CD4-positive, alpha-beta T cell (primary cell): ENCODE measurements at regions of chr22 and their contacts with region 1.

Region 1: DNA sequence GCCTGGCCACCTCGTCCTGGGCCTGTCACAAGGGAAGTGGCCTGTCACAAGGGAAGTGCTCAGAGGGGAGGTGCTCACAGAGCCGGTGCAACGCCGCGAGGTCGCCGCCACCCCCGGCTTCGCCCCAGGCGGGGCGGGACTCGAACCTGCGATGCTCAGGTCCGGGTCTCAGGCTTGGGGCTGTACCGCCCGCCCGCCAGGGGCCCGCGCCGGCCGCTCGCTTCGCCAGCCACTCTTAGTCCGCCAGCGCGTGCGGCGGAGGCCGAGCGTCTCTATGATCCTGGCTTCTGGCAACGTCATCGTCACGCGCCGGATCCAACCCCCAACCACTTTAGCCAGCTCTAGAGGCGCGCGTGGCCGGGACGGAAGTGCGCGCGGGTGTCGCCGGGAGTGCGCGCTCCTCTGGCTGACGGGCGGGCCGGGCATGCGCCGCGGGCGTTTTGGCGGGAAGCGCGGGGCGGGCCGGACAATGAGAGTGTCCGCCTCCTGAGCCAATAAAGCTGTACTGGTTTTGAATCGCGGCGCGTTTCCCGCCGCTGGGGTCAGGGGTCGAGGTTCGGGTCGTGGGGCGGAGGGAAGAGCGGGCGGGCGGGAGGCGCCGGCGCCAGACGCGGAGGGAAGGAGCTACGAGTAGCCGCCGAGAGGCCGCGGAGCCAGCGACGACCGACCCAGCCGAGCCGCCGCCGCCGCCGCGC is at the start of gene TRMT2A:
- DNase-seq: peak; percentile 91 to 99 (median 96)
- ATAC-seq: peak; percentile 80
- H3K4me3 ChIP-seq: peak within 1 kb of the TSS; percentile 85
- H3K4me3 Mint-ChIP-seq: peak within 1 kb of the TSS; percentile 97
- H3K27ac ChIP-seq: peak within 1 kb of the TSS; percentile 76 to 84
- H3K27ac Mint-ChIP-seq: peak within 1 kb of the TSS; percentile 82
- H3K4me1 ChIP-seq: peaks cover 75% of the 10 kb centered on the region
- H3K4me1 Mint-ChIP-seq: peaks cover 30% of the 10 kb centered on the region
- H3K27me3 ChIP-seq: peaks cover 0 to 5% of the 10 kb centered on the region in 2 experiments
- H3K27me3 Mint-ChIP-seq: no peaks in the 10 kb centered on the region
- CTCF ChIP-seq: no peak
- total RNA-seq, gene TRMT2A: 79.3 to 84.2 TPM

Region 2: DNA sequence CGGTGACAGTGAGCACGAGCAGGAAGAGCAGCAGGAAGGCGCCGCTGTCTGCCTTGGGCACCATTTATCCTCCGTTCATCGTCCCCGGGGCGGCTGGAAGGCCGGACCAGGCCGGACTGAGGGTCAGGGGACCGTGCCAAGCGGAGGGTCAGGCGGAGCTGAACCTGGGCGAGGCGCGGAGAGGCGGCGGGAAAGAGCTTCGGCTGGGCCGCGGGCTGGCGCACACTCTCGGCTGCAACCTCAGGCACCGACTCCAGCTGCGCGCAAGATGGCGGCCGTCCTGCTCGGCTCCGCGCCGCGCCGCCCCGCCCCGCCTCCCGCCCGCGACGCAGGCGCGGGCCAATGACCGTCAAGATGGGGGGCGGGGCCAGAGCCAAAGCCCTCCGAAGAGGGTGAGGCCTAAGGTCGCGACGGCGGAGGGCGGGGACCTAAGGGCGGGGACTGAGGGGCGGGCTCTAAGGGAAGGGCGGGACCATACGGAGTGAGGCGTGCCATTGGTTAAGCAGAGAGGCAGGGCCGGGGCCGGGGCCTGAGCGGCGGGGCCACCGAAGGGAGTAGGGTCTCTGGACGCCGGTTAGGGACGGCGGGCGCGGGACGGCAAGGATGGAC is 994.9 kb before region 1 on chr22 and contains the start of gene DGCR2:
- CTCF ChIA-PET with region 1: no interaction called
- POLR2A ChIA-PET with region 1: no interaction called
- intact Hi-C with region 1: loop called in 1 of 2 experiments (anchors 5 kb)
- DNase-seq: peak; percentile 95 to 99 (median 96)
- ATAC-seq: peak; percentile 97
- H3K4me3 ChIP-seq: peak within 1 kb of the TSS; percentile 95
- H3K4me3 Mint-ChIP-seq: peak within 1 kb of the TSS; percentile 94
- H3K27ac ChIP-seq: peak within 1 kb of the TSS in 1 of 2 donors; percentile 73
- H3K27ac Mint-ChIP-seq: peak within 1 kb of the TSS; percentile 87
- H3K4me1 ChIP-seq: peaks cover 52% of the 10 kb centered on the region
- H3K4me1 Mint-ChIP-seq: peaks cover 52% of the 10 kb centered on the region
- H3K27me3 ChIP-seq: no peaks in the 10 kb centered on the region
- H3K27me3 Mint-ChIP-seq: no peaks in the 10 kb centered on the region
- CTCF ChIP-seq: no peak
- total RNA-seq, gene DGCR2: 31.9 to 35.5 TPM

Region 3: GRCh38 chr22:19854778-19855503 is 262.2 kb before region 1 on chr22 and contains the starts of genes GNB1L and RTL10:
- CTCF ChIA-PET with region 1: no interaction called
- POLR2A ChIA-PET with region 1: no interaction called
- intact Hi-C with region 1: loop called in 1 of 2 experiments (anchors 10 kb)
- DNase-seq: peak; percentile 92 to 99 (median 96)
- ATAC-seq: peak; percentile 89
- H3K4me3 ChIP-seq: peak within 1 kb of the TSS; percentile 99
- H3K4me3 Mint-ChIP-seq: peak within 1 kb of the TSS; percentile 95
- H3K27ac ChIP-seq: peak within 1 kb of the TSS; percentile 78 to 90
- H3K27ac Mint-ChIP-seq: peak within 1 kb of the TSS; percentile 96
- H3K4me1 ChIP-seq: peaks cover 58% of the 10 kb centered on the region
- H3K4me1 Mint-ChIP-seq: peaks cover 71% of the 10 kb centered on the region
- H3K27me3 ChIP-seq: no peaks in the 10 kb centered on the region
- H3K27me3 Mint-ChIP-seq: no peaks in the 10 kb centered on the region
- CTCF ChIP-seq: no peak
- total RNA-seq, gene GNB1L: 3.0 to 6.5 TPM
- total RNA-seq, gene RTL10: 24.7 TPM

Region 4: DNA sequence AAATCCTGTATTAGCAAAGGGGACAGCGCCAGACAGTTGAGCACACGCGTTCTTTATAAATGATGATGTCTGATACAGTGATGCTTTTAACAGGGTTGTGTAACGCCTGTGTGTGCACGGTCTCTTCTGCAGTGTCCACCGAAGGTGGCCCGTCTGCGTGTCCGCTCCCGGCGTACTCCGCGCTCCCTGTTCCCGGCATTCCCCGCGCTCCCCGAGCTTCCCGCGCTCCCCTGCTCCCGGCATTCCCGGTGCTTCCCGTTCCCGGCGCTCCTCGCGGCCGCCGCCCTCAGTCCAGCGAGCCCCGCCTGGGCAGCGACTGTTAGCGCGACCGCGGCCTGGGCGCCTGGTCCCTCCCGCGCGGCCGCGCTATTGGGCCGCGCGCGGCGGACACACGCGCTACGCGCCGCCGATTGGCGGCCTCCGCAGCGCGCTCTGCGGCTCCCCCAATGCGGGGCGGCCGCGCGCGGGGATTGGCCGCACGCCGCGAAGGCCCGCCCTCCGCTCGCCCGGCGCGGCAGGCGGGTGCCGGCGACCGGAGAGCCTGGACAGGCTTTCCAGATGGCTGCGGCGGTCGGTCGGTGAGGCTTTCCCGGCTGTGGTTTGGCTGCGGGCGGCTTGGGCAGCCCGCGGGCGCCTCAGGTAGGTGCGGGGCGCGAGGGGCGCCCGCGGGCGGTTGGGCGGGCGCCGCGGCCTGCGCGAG is 37.2 kb before region 1 on chr22 and contains the start of gene DGCR8:
- CTCF ChIA-PET with region 1: no interaction called
- POLR2A ChIA-PET with region 1: interaction called, 10 read pairs
- intact Hi-C with region 1: loop called in 1 of 2 experiments (anchors 1 kb)
- DNase-seq: peak; percentile 24 to 92 (median 62)
- ATAC-seq: peak; percentile 89
- H3K4me3 ChIP-seq: peak within 1 kb of the TSS; percentile 76
- H3K4me3 Mint-ChIP-seq: peak within 1 kb of the TSS; percentile 99
- H3K27ac ChIP-seq: peak within 1 kb of the TSS; percentile 52 to 53
- H3K27ac Mint-ChIP-seq: peak within 1 kb of the TSS; percentile 90
- H3K4me1 ChIP-seq: peaks cover 45% of the 10 kb centered on the region
- H3K4me1 Mint-ChIP-seq: peaks cover 44% of the 10 kb centered on the region
- H3K27me3 ChIP-seq: no peaks in the 10 kb centered on the region
- H3K27me3 Mint-ChIP-seq: no peaks in the 10 kb centered on the region
- CTCF ChIP-seq: no peak
- total RNA-seq, gene DGCR8: 17.8 to 18.5 TPM

Region 5: DNA sequence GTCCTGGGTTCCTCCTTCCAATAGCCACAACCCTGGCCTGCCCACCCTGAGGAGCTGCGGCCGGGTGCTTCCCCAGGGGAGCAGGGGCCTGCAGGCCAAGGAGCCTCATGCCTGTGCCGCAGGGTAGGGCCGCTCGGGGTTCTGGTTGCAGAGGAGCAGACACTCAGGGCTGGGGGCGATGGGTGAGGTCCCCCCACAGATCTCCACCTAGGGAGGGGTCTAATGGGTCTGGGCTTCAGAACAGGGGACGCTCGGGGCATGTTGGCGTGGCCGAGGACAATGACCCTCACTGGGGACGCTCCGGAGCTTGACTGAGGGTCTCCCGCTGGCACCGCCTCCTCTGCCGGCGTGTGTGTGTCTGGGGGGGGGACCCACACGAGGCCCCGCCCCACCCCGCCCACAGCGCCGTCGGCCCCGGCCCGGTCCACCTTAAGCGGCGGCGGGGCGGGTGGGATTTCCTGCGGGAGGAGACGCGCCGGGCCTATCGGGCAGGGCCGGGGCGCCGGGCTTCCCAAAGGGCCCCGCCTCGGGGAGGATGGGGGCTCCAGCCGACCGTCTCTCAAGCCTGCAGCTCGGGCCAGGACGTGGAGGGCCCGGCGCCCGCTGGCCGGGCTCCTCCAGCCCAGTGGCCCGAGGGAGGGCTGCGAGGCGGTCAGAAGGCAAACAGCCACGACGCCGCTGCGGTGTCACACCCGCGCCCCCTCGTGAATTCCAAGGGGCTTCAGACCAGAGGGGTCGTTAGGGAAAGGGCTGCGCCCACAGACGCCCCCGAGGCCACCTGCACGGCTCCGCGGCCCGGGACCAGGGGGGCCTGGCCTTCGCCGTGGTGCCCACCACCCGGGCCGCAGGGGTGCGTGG is 13.9 kb after region 1 on chr22:
- CTCF ChIA-PET with region 1: interaction called, 8 read pairs
- POLR2A ChIA-PET with region 1: interaction called, 11 read pairs
- intact Hi-C with region 1: loop called in 1 of 2 experiments (anchors 1 kb)
- DNase-seq: peak; percentile 58 to 88 (median 82)
- ATAC-seq: peak; percentile 71
- H3K4me3 ChIP-seq: peak overlapping the region; percentile 70
- H3K4me3 Mint-ChIP-seq: peak overlapping the region; percentile 85
- H3K27ac ChIP-seq: peak overlapping the region; percentile 38 to 75
- H3K27ac Mint-ChIP-seq: peak overlapping the region; percentile 79
- H3K4me1 ChIP-seq: peaks cover 54% of the 10 kb centered on the region
- H3K4me1 Mint-ChIP-seq: peaks cover 28% of the 10 kb centered on the region
- H3K27me3 ChIP-seq: no peaks in the 10 kb centered on the region
- H3K27me3 Mint-ChIP-seq: no peaks in the 10 kb centered on the region
- CTCF ChIP-seq: no peak

Region 6: GRCh38 chr22:20507253-20508066 is 390.4 kb after region 1 on chr22 and contains the start of gene MED15:
- CTCF ChIA-PET with region 1: no interaction called
- POLR2A ChIA-PET with region 1: no interaction called
- intact Hi-C with region 1: loop called in 1 of 2 experiments (anchors 5 kb)
- DNase-seq: peak; percentile 77 to 93 (median 84)
- ATAC-seq: peak; percentile 83
- H3K4me3 ChIP-seq: peak within 1 kb of the TSS; percentile 100
- H3K4me3 Mint-ChIP-seq: peak within 1 kb of the TSS; percentile 98
- H3K27ac ChIP-seq: peak within 1 kb of the TSS; percentile 88 to 90
- H3K27ac Mint-ChIP-seq: peak within 1 kb of the TSS; percentile 94
- H3K4me1 ChIP-seq: peaks cover 42% of the 10 kb centered on the region
- H3K4me1 Mint-ChIP-seq: peaks cover 51% of the 10 kb centered on the region
- H3K27me3 ChIP-seq: no peaks in the 10 kb centered on the region
- H3K27me3 Mint-ChIP-seq: no peaks in the 10 kb centered on the region
- CTCF ChIP-seq: no peak
- total RNA-seq, gene MED15: 181 to 191 TPM